Dendritic cell treated with granulocyte-macrophage colony-stimulating factor and Interleukin-4, amounts not matched to agents 40 ng/mL and 50 ng/mL, for 4 days (primary cell): ENCODE measurements at regions of chr14 and their contacts with region 1.

Region 1: GRCh38 chr14:22303589-22304195 is 285.3 kb downstream of the DAD1 start:
- H3K4me3 Mint-ChIP-seq: no peak overlapping the region
- H3K27ac Mint-ChIP-seq: no peak overlapping the region
- H3K4me1 Mint-ChIP-seq: no peaks in the 10 kb centered on the region
- H3K27me3 Mint-ChIP-seq: peaks cover 1% of the 10 kb centered on the region

Region 2: GRCh38 chr14:22375321-22375930 is 71.7 kb after region 1 on chr14:
- intact Hi-C with region 1: loop called (anchors 2 kb)
- H3K4me3 Mint-ChIP-seq: no peak overlapping the region
- H3K27ac Mint-ChIP-seq: no peak overlapping the region
- H3K4me1 Mint-ChIP-seq: no peaks in the 10 kb centered on the region
- H3K27me3 Mint-ChIP-seq: no peaks in the 10 kb centered on the region